Activated naive CD4-positive, alpha-beta T cell treated with anti-CD3 and anti-CD28 coated beads, Interleukin-2, amount 10 ng/mL, durations not matched to agents 7 days and 5 days (primary cell): ENCODE measurements at regions of chr7 and their contacts with region 1.

Region 1: GRCh38 chr7:98841179-98841997 is 28.4 kb downstream of the TMEM130 start:
- DNase-seq: peak; percentile 77
- H3K4me3 Mint-ChIP-seq: no peak overlapping the region
- H3K27ac Mint-ChIP-seq: no peak overlapping the region
- H3K4me1 Mint-ChIP-seq: no peaks in the 10 kb centered on the region
- H3K27me3 Mint-ChIP-seq: peaks cover 26% of the 10 kb centered on the region

Region 2: DNA sequence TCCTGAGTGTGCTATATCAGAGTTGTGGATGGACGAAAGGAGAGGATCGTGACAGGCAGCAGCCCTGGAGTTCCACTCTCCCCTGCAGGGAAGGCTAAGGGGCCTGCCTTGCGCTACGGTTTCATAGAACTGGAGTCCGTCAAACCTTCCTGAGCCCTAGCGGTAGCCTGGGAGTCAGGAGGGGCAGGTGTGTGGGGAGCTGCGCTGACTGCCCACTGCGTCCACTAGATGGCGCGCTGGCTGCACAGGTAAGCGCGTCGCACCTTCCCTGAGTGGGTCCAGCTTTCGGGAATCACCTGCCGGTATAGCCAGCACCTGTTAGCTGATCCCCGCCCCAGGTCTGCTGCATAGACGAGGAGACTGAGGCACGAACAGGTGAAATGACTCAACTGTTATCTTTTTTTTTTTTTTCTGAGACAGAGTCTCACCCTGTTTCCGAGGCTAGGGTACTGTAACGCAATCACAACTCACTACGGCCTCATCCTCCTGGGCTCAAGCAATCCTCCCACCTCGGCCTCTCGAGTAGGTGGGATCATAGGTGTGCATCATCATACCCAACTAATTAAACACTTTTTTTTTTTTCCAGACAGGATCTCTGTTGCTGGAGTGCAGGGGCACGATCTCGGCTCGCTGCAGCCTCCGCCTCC is 420.3 kb before region 1 on chr7:
- CTCF ChIA-PET with region 1: interaction called, 16 read pairs
- DNase-seq: peak; percentile 72
- H3K4me3 Mint-ChIP-seq: no peak overlapping the region
- H3K27ac Mint-ChIP-seq: no peak overlapping the region
- H3K4me1 Mint-ChIP-seq: no peaks in the 10 kb centered on the region
- H3K27me3 Mint-ChIP-seq: peaks cover 8% of the 10 kb centered on the region

Region 3: DNA sequence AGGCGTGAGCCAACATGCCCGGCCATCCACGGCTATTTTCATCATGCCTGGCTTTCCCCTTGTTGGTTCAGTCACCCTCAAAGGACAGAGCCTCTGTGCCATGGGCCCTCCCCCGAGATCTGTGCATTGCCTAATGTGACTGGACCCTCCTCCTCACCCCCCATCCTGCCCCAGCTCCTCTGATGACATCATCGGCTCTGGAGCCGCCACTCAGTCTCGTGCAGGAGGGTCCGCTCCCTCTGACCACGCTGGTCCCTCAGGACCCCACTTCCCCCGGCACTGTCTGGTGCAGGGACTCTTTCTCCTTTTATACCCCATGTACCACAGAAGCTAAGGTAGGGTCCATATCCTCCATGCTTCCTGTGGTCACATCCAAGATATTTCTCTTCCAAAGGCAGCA is 407.3 kb before region 1 on chr7:
- CTCF ChIA-PET with region 1: interaction called, 10 read pairs
- DNase-seq: no peak
- H3K4me3 Mint-ChIP-seq: no peak overlapping the region
- H3K27ac Mint-ChIP-seq: no peak overlapping the region
- H3K4me1 Mint-ChIP-seq: peaks cover 9% of the 10 kb centered on the region
- H3K27me3 Mint-ChIP-seq: peaks cover 3% of the 10 kb centered on the region

Region 4: DNA sequence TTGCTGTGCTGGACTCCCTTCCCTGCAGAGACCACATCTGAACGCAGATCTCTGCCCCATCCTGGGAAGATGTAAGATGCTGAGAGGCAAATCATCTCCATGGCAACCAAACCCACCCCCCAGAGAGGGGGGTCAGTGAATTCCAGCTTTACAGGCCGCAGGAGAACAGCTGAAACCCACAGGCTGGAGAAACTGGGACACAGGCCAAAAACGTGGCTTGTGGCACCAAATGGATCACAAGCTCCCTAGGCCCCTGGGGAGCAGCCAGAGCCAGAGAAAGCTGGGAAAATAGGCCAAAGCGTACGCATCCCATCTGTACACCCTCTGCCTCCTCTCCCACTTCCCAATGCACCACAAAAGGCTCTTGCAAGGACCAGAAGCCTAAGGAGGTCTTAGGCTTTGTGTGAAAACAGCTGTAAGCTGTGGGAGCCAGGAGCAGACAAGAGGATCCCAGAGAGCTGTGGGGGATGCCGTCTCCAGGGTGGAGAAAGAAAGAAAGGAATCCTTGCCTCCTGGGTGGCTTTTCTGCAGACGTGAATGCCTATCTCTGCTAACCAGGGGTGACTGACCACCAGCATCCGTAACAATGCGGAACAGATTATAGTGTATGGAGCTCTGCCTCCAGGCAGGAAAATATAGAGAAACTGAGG is 31.1 kb before region 1 on chr7:
- CTCF ChIA-PET with region 1: no interaction called
- DNase-seq: no peak
- H3K4me3 Mint-ChIP-seq: no peak overlapping the region
- H3K27ac Mint-ChIP-seq: no peak overlapping the region
- H3K4me1 Mint-ChIP-seq: no peaks in the 10 kb centered on the region
- H3K27me3 Mint-ChIP-seq: no peaks in the 10 kb centered on the region

Region 5: DNA sequence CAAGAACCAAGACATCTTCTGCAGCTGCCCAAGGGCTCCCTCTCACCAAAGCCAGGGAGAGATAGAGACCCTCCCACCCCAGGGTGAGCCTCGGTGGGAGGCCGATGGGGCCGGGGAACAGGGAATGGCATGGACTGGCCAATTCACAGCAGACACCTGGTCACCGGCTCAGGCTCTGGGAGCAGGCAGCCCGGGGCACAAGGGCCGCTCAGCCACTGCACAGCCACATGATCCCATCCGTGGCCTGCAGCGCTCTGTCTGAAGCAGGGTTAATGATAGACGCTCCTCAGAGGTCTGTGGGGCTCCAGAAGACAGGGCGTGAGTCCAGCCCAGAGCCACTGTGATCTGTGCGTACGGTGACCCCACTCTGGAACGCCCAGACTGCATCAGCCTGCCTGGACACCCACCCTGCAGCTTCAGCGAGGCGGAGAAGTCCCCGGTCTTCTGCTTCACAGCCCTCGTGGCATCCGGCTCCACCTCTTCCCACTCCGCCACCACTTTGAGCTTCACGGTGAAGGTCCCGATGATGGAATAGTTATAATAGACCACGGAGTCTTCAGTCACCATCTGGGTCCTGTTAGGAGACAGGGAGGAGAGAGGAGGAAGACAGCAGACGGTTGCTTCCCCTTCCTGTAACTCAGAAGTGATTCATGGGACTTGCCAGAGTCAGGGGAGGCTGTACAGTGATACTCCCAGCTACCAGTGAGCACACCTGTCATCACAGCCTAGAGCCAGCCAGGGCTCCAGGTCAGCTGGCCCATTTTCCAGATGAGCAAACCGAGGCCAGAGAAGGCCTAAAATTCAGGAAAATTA is 14.4 kb after region 1 on chr7:
- CTCF ChIA-PET with region 1: interaction called, 10 read pairs
- DNase-seq: no peak
- H3K4me3 Mint-ChIP-seq: no peak overlapping the region
- H3K27ac Mint-ChIP-seq: no peak overlapping the region
- H3K4me1 Mint-ChIP-seq: no peaks in the 10 kb centered on the region
- H3K27me3 Mint-ChIP-seq: peaks cover 36% of the 10 kb centered on the region